ENCODE measurements at regions of chr1 and their contacts with region 1.

Region 1: DNA sequence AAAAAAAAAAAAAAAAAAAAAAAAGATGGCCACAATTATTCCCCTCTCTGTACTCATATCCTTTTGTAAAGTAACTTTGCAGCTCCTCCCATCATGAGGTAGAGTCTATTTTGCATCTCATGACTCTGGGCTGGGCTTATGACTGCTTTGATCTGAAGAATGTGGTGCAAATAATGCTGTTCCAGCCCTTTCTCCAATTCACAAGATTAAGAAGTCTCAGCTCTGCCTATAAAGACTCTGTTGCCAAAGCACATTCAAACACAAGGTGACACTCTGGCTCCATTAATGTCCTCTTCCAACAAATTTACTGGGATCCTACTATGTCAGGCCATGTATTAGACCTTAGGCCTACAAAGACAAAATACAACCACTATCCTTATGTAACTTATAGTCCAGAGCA is 64.8 kb upstream of the PTCH2 start:
- DNase-seq: no peak
- H3K4me3 ChIP-seq: no peak overlapping the region
- H3K27ac ChIP-seq: no peak overlapping the region
- H3K4me1 ChIP-seq: no peaks in the 10 kb centered on the region
- H3K27me3 ChIP-seq: no peaks in the 10 kb centered on the region
- CTCF ChIP-seq: no peak

Region 2: GRCh38 chr1:45112661-45113060 is 204.8 kb after region 1 on chr1:
- CTCF ChIA-PET with region 1: no interaction called
- POLR2A ChIA-PET with region 1: interaction called, 25 read pairs
- intact Hi-C with region 1: no loop called
- DNase-seq: no peak
- H3K4me3 ChIP-seq: no peak overlapping the region
- H3K27ac ChIP-seq: no peak overlapping the region
- H3K4me1 ChIP-seq: no peaks in the 10 kb centered on the region
- H3K27me3 ChIP-seq: no peaks in the 10 kb centered on the region
- CTCF ChIP-seq: no peak